K562 (cell line): ENCODE measurements at regions of chr20 and their contacts with region 1.

Region 1: GRCh38 chr20:38434743-38435554 is at the start of gene SNHG17:
- DNase-seq: peak; percentile 84 to 97 (median 90)
- ATAC-seq: peak; percentile 86
- H3K4me3 ChIP-seq: peak within 1 kb of the TSS; percentile 95
- H3K27ac ChIP-seq: peak within 1 kb of the TSS; percentile 94
- H3K4me1 ChIP-seq: peaks cover 20 to 25% of the 10 kb centered on the region in 2 experiments; a peak in 4 of 5 replicates
- H3K27me3 ChIP-seq: no peaks in the 10 kb centered on the region
- CTCF ChIP-seq: peak; percentile 97 to 100 (median 99)
- EP300 ChIP-seq: peak; percentile 47
- POLR2A ChIP-seq: peak; percentile 99
- RAD21 ChIP-seq: peak; percentile 37 to 57
- polyA plus RNA-seq, gene SNHG17: 29.8 to 35.9 TPM

Region 2: DNA sequence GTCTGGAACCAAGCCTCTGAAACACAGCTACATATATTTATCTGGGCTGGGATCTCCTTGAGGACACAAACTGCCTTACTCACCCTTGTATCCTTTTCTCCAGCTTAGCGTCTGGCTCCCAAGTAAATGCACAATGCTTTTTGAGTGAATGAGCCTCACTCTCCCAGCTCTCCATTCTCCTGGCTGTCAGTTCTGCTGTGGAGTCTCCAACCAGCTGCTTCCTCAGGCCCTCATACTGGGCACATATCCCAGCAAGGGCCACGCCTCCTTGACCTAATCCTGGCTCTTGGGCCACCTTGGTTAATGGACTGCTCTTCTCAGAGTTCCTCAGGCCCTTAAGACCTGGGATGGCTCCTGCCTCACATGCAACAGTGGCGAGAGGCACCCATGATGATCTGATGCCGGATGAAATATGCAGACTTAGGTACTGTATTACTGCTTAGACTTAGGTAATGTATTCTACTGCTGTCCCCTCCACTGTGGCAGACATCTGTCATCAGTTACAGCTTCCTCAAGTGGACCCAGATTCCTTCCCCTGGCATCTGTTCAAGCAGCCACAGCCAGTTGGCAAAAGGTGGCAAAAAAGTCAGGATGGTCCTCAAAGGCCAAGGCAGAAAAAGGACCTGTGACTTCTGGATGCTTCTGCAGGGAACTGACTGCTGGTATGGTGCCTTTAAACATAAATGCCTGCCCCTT is 16.3 kb before region 1 on chr20:
- CTCF ChIA-PET with region 1: no interaction called
- POLR2A ChIA-PET with region 1: interaction called, 41 read pairs
- in situ Hi-C with region 1: no loop called
- intact Hi-C with region 1: no loop called
- DNase-seq: peak in 1 of 4 experiments; percentile 30
- ATAC-seq: peak; percentile 46
- H3K4me3 ChIP-seq: no peak overlapping the region
- H3K27ac ChIP-seq: peak overlapping the region; percentile 37; the same call in 2 of the 3 replicates
- H3K4me1 ChIP-seq: no peaks in the 10 kb centered on the region; a peak in 1 of 5 replicates
- H3K27me3 ChIP-seq: no peaks in the 10 kb centered on the region
- CTCF ChIP-seq: no peak
- EP300 ChIP-seq: no peak
- POLR2A ChIP-seq: peak; percentile 42
- RAD21 ChIP-seq: no peak

Region 3: GRCh38 chr20:38446441-38447209 is 11.7 kb after region 1 on chr20:
- CTCF ChIA-PET with region 1: interaction called, 72 read pairs
- POLR2A ChIA-PET with region 1: interaction called, 130 read pairs
- in situ Hi-C with region 1: no loop called
- intact Hi-C with region 1: no loop called
- DNase-seq: peak; percentile 90 to 96 (median 93)
- ATAC-seq: peak; percentile 95
- H3K4me3 ChIP-seq: peak overlapping the region; percentile 98
- H3K27ac ChIP-seq: peak overlapping the region; percentile 92
- H3K4me1 ChIP-seq: peaks cover 20 to 26% of the 10 kb centered on the region in 2 experiments
- H3K27me3 ChIP-seq: no peaks in the 10 kb centered on the region
- CTCF ChIP-seq: peak; percentile 95 to 97 (median 96)
- EP300 ChIP-seq: peak; percentile 36; the same call in 1 of the 2 replicates
- POLR2A ChIP-seq: peak; percentile 97
- RAD21 ChIP-seq: peak; percentile 51 to 82

Region 4: DNA sequence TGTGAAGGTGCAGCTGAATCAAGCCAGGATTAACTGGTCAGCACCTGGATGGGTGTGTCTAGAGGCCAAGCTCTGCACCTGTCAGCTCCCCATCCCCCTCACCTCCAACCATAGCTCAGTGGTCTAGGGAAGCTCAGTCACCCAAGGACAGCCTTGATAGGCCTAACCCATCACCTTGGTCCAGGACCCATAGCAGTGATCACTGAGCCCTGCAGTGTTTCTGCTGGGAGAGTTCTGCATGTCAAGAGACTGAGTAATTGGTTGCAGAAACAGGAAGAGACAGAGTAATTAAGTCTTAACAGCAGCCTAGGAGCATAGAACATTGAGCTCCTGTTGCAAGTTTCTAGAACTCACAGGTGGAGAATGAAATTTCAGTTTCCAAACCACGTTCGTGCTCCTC is 19.0 kb after region 1 on chr20:
- CTCF ChIA-PET with region 1: interaction called, 4 read pairs
- POLR2A ChIA-PET with region 1: interaction called, 26 read pairs
- in situ Hi-C with region 1: no loop called
- intact Hi-C with region 1: no loop called
- DNase-seq: no peak
- ATAC-seq: no peak
- H3K4me3 ChIP-seq: no peak overlapping the region
- H3K27ac ChIP-seq: no peak overlapping the region; the same call in 2 of the 3 replicates
- H3K4me1 ChIP-seq: peaks cover 20 to 43% of the 10 kb centered on the region in 2 experiments
- H3K27me3 ChIP-seq: peaks cover 4 to 12% of the 10 kb centered on the region in 2 experiments; a peak in 4 of 5 replicates
- CTCF ChIP-seq: no peak
- EP300 ChIP-seq: no peak
- POLR2A ChIP-seq: no peak
- RAD21 ChIP-seq: no peak

Region 5: GRCh38 chr20:38472513-38473372 is 37.8 kb after region 1 on chr20 and contains the start of gene RALGAPB:
- CTCF ChIA-PET with region 1: interaction called, 3 read pairs
- POLR2A ChIA-PET with region 1: interaction called, 21 read pairs
- in situ Hi-C with region 1: no loop called
- intact Hi-C with region 1: loop called (anchors 5 kb)
- DNase-seq: peak; percentile 92 to 100 (median 95)
- ATAC-seq: peak; percentile 96
- H3K4me3 ChIP-seq: peak within 1 kb of the TSS; percentile 96
- H3K27ac ChIP-seq: peak within 1 kb of the TSS; percentile 74
- H3K4me1 ChIP-seq: peaks cover 10 to 16% of the 10 kb centered on the region in 2 experiments; a peak in 4 of 5 replicates
- H3K27me3 ChIP-seq: no peaks in the 10 kb centered on the region
- CTCF ChIP-seq: peak; percentile 62 to 73 (median 70)
- EP300 ChIP-seq: no peak
- POLR2A ChIP-seq: peak; percentile 75
- RAD21 ChIP-seq: peak; percentile 42 to 63; a peak in 2 of 4 replicates
- polyA plus RNA-seq, gene RALGAPB: 4.3 to 6.0 TPM

Region 6: DNA sequence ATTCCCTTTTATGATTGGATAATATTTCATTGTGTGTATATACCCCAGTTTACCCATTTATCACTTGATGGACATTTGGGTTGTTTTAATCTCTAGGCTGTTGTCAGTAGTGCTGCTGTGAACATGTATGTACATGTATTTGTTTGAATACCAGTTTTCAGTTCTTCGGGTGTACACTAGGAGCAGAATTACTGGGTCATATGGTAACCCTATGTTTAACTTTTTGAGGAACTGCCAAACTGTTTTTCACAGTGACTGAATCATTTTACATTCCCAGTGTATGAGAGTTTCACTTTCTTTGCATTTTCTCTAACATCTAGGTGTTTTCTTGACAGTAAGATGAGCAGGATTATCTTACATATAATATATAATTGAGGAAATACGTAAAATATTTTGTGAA is 101.4 kb after region 1 on chr20:
- CTCF ChIA-PET with region 1: no interaction called
- POLR2A ChIA-PET with region 1: no interaction called
- in situ Hi-C with region 1: no loop called
- intact Hi-C with region 1: no loop called
- DNase-seq: no peak
- ATAC-seq: no peak
- H3K4me3 ChIP-seq: no peak overlapping the region
- H3K27ac ChIP-seq: no peak overlapping the region
- H3K4me1 ChIP-seq: no peaks in the 10 kb centered on the region
- H3K27me3 ChIP-seq: no peaks in the 10 kb centered on the region
- CTCF ChIP-seq: no peak
- EP300 ChIP-seq: no peak
- POLR2A ChIP-seq: no peak
- RAD21 ChIP-seq: no peak